ENCODE measurements at regions of chr10 and their contacts with region 1.

Region 1: GRCh38 chr10:20858292-20859124 is 38.6 kb downstream of the NEBL start:
- DNase-seq: peak; percentile 8
- ATAC-seq: peak; percentile 66; the same call in 1 of the 2 replicates
- H3K4me3 ChIP-seq: no peak overlapping the region
- H3K27ac ChIP-seq: no peak overlapping the region
- H3K4me1 ChIP-seq: no peaks in the 10 kb centered on the region
- H3K27me3 ChIP-seq: no peaks in the 10 kb centered on the region
- CTCF ChIP-seq: peak; percentile 36 to 68 (median 37); a peak in 5 of 6 replicates
- POLR2A ChIP-seq: no peak
- RAD21 ChIP-seq: peak; percentile 70

Region 2: DNA sequence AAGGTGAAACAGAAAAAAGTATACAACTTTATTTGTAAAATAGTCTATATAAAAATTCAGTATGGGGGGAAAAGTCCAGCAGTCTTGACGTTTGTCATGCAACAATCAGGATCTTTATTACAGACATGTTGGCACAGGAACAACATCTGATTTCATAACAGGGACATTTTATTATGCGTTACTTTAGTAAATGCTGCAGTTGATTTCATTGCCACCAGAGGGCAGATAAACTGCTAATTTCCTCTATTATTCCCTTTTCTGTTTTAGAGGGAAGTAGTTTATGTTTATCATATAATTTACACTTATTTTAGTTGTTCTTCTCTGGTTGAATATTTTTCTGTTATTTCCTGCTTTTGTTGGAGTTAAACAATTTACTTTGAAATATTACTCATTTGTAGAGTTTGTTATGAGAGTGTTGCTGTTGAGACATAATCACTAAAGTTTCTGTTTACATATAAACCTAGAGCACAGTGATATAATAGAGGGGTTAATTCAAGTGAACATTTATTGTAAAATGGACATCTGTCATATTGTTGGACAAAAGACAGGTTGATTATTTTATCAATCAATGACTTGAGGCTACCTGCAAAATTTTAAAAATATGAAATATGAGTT is 1039.0 kb before region 1 on chr10:
- CTCF ChIA-PET with region 1: interaction called, 8 read pairs
- POLR2A ChIA-PET with region 1: no interaction called
- RAD21 ChIA-PET with region 1: no interaction called
- intact Hi-C with region 1: loop called (anchors 1 kb)
- DNase-seq: no peak
- ATAC-seq: no peak
- H3K4me3 ChIP-seq: no peak overlapping the region
- H3K27ac ChIP-seq: no peak overlapping the region
- H3K4me1 ChIP-seq: no peaks in the 10 kb centered on the region
- H3K27me3 ChIP-seq: no peaks in the 10 kb centered on the region
- CTCF ChIP-seq: peak in 2 of 3 experiments; percentile 42 to 60; a peak in 4 of 6 replicates
- POLR2A ChIP-seq: no peak
- RAD21 ChIP-seq: peak; percentile 20; the same call in 1 of the 2 replicates

Region 3: GRCh38 chr10:21078410-21079329 is 220.2 kb after region 1 on chr10:
- CTCF ChIA-PET with region 1: no interaction called
- POLR2A ChIA-PET with region 1: no interaction called
- RAD21 ChIA-PET with region 1: no interaction called
- intact Hi-C with region 1: loop called (anchors 5 kb)
- DNase-seq: peak; percentile 58
- ATAC-seq: peak; percentile 98
- H3K4me3 ChIP-seq: no peak overlapping the region
- H3K27ac ChIP-seq: no peak overlapping the region
- H3K4me1 ChIP-seq: peaks cover 0 to 6% of the 10 kb centered on the region in 2 experiments; a peak in 2 of 4 replicates
- H3K27me3 ChIP-seq: no peaks in the 10 kb centered on the region
- CTCF ChIP-seq: peak; percentile 64 to 84 (median 79)
- POLR2A ChIP-seq: no peak
- RAD21 ChIP-seq: peak; percentile 87

Region 4: DNA sequence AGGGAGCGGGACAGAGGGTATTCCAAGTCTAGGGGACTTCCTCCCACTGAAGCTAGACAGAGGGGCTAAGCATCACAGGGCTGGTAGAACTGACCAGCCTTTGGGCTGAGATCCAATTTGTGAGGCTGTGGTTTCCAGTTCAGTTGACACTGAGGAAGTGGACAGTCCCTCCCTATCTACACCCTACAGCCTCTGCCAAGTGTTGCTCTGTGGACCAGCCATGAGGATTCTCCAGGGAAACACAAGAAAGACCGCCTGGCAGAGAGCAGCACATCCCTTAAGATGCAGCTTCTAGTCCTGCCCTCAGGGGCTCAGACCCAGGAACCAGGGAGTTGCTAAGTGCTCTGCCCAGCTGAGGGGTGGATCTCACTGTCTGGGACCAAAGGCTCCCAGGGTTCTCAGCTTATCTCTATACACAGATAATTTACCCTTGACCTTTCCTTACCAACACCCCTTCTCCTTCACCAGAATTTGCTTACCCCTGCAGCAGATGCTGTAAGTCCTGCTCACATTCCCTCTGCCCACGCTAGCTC is 415.0 kb after region 1 on chr10:
- CTCF ChIA-PET with region 1: interaction called, 5 read pairs
- POLR2A ChIA-PET with region 1: no interaction called
- RAD21 ChIA-PET with region 1: no interaction called
- intact Hi-C with region 1: loop called (anchors 1 kb)
- DNase-seq: no peak
- ATAC-seq: no peak
- H3K4me3 ChIP-seq: no peak overlapping the region
- H3K27ac ChIP-seq: no peak overlapping the region
- H3K4me1 ChIP-seq: peaks cover 9 to 26% of the 10 kb centered on the region in 2 experiments; a peak in 3 of 4 replicates
- H3K27me3 ChIP-seq: no peaks in the 10 kb centered on the region
- CTCF ChIP-seq: no peak
- POLR2A ChIP-seq: no peak
- RAD21 ChIP-seq: no peak

Region 5: GRCh38 chr10:21953585-21954057 is 1095.1 kb after region 1 on chr10:
- CTCF ChIA-PET with region 1: no interaction called
- POLR2A ChIA-PET with region 1: no interaction called
- RAD21 ChIA-PET with region 1: no interaction called
- intact Hi-C with region 1: loop called (anchors 5 kb)
- DNase-seq: peak; percentile 53
- ATAC-seq: peak; percentile 72
- H3K4me3 ChIP-seq: no peak overlapping the region
- H3K27ac ChIP-seq: no peak overlapping the region
- H3K4me1 ChIP-seq: peaks cover 0 to 4% of the 10 kb centered on the region in 2 experiments; a peak in 1 of 4 replicates
- H3K27me3 ChIP-seq: no peaks in the 10 kb centered on the region
- CTCF ChIP-seq: peak; percentile 25 to 61 (median 50); a peak in 4 of 6 replicates
- POLR2A ChIP-seq: no peak
- RAD21 ChIP-seq: peak; percentile 65